ENCODE measurements at regions of chr5 and their contacts with region 1.

Region 1: DNA sequence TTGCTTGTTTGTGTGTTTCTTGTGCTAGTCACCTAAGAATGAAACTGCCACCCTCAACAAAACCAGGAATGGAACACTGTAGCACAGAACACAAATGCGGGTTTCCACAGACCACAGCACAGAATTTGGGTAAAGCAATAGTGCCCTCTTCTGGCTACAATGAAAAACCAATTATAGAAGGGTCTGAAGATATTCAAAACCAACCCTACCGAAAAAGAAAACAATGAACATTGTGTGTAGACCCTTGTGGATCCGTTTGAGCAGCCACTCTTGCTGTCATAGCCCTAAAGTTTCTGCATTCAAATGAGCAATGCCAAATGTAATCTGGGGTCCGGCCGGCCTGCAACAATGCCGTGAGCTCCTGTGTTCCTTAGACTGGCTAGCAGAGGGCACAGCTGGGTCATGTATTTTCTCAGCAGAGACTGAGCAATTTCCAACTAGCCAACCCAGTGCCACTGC is 8.3 kb upstream of the ENC1 start:
- DNase-seq: no peak
- ATAC-seq: peak; percentile 94
- H3K4me3 ChIP-seq: no peak overlapping the region
- H3K27ac ChIP-seq: no peak overlapping the region
- H3K4me1 ChIP-seq: no peaks in the 10 kb centered on the region
- H3K27me3 ChIP-seq: no peaks in the 10 kb centered on the region; a peak in 2 of 4 replicates
- CTCF ChIP-seq: peak; percentile 60 to 73 (median 64)
- EP300 ChIP-seq: no peak
- POLR2A ChIP-seq: no peak
- RAD21 ChIP-seq: peak; percentile 95

Region 2: GRCh38 chr5:74035521-74035981 is 613.3 kb before region 1 on chr5:
- CTCF ChIA-PET with region 1: interaction called, 17 read pairs
- POLR2A ChIA-PET with region 1: no interaction called
- RAD21 ChIA-PET with region 1: interaction called, 9 read pairs
- SMC1A ChIA-PET with region 1: interaction called, 14 read pairs
- in situ Hi-C with region 1: loop called (anchors 5 kb)
- intact Hi-C with region 1: loop called (anchors 2 kb)
- DNase-seq: peak; percentile 59
- ATAC-seq: peak; percentile 97
- H3K4me3 ChIP-seq: no peak overlapping the region
- H3K27ac ChIP-seq: no peak overlapping the region
- H3K4me1 ChIP-seq: peaks cover 8% of the 10 kb centered on the region; the same call in 1 of the 2 replicates
- H3K27me3 ChIP-seq: no peaks in the 10 kb centered on the region
- CTCF ChIP-seq: peak; percentile 56 to 71 (median 70)
- EP300 ChIP-seq: no peak
- POLR2A ChIP-seq: no peak
- RAD21 ChIP-seq: peak; percentile 82

Region 3: DNA sequence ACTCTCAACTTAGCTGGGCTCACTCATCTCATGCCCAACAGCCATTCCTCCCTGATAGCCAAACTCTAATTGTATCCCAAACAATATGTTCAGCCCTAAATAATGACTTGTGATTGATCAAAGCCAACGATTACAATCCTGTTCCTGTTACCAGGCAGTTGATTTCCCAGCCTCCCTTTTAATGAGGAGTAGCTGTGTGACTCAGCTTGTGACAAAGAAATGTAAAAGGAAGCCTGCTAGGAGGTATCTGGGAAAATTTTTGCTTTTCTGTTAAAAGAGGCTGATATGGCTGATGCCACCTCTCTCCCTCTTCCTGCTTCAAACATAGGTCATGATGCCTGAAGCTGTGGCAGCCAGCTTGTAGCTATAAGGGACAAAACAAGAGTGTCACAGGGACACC is 11.3 kb after region 1 on chr5:
- CTCF ChIA-PET with region 1: interaction called, 10 read pairs
- POLR2A ChIA-PET with region 1: no interaction called
- RAD21 ChIA-PET with region 1: interaction called, 3 read pairs
- SMC1A ChIA-PET with region 1: interaction called, 3 read pairs
- in situ Hi-C with region 1: no loop called
- intact Hi-C with region 1: no loop called
- DNase-seq: no peak
- ATAC-seq: no peak
- H3K4me3 ChIP-seq: no peak overlapping the region
- H3K27ac ChIP-seq: no peak overlapping the region
- H3K4me1 ChIP-seq: no peaks in the 10 kb centered on the region
- H3K27me3 ChIP-seq: peaks cover 0 to 2% of the 10 kb centered on the region in 2 experiments; a peak in 3 of 4 replicates
- CTCF ChIP-seq: no peak
- EP300 ChIP-seq: no peak
- POLR2A ChIP-seq: no peak
- RAD21 ChIP-seq: no peak